OCI-LY7 (cell line): ENCODE measurements at regions of chr12 and their contacts with region 1.

Region 1: DNA sequence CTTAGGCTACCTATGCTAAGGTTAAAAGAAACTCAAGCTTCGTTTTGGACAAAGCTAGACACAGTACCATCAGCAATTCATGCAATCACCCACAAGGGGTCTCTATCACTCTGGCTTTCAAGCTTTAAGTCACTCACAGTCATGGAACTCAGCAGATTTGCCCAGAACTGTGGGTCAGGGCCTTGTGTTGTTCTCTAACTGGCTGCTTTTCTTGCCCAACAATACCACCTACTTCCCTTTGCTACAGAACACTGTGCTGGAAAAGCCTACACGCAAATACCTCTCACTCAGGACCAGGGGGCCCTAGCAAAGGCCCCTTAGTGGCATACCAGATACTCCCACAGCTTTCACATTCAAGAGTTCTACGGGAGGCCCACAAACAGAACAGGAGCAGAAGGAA is 9.1 kb downstream of the NEMP1 start:
- DNase-seq: peak; percentile 82
- H3K4me3 ChIP-seq: no peak overlapping the region
- H3K27ac ChIP-seq: peak overlapping the region; percentile 30
- H3K4me1 ChIP-seq: peaks cover 27% of the 10 kb centered on the region
- CTCF ChIP-seq: peak; percentile 94

Region 2: GRCh38 chr12:56709759-56710376 is 359.7 kb before region 1 on chr12:
- CTCF ChIA-PET with region 1: no interaction called
- POLR2A ChIA-PET with region 1: no interaction called
- intact Hi-C with region 1: no loop called
- DNase-seq: no peak
- H3K4me3 ChIP-seq: no peak overlapping the region
- H3K27ac ChIP-seq: no peak overlapping the region
- H3K4me1 ChIP-seq: no peaks in the 10 kb centered on the region
- CTCF ChIP-seq: no peak

Region 3: GRCh38 chr12:57005980-57006808 is 63.3 kb before region 1 on chr12 and contains the start of gene ZBTB39:
- CTCF ChIA-PET with region 1: interaction called, 4 read pairs
- POLR2A ChIA-PET with region 1: interaction called, 3 read pairs
- intact Hi-C with region 1: loop called (anchors 2 kb)
- DNase-seq: peak; percentile 84
- H3K4me3 ChIP-seq: peak within 1 kb of the TSS; percentile 92
- H3K27ac ChIP-seq: peak within 1 kb of the TSS; percentile 44
- H3K4me1 ChIP-seq: peaks cover 15% of the 10 kb centered on the region
- CTCF ChIP-seq: peak; percentile 76
- total RNA-seq, gene ZBTB39: 10.9 TPM in 2 replicates

Region 4: GRCh38 chr12:57088459-57089248 is 19.1 kb after region 1 on chr12 and contains the start of gene NAB2:
- CTCF ChIA-PET with region 1: interaction called, 10 read pairs
- POLR2A ChIA-PET with region 1: interaction called, 7 read pairs
- intact Hi-C with region 1: loop called (anchors 1 kb)
- DNase-seq: peak; percentile 96
- H3K4me3 ChIP-seq: peak within 1 kb of the TSS; percentile 80
- H3K27ac ChIP-seq: peak within 1 kb of the TSS; percentile 88
- H3K4me1 ChIP-seq: peaks cover 42% of the 10 kb centered on the region
- CTCF ChIP-seq: no peak
- total RNA-seq, gene NAB2: 8.5 and 9.6 TPM in 2 replicates

Region 5: GRCh38 chr12:57182921-57183790 is 113.6 kb after region 1 on chr12:
- CTCF ChIA-PET with region 1: no interaction called
- POLR2A ChIA-PET with region 1: no interaction called
- intact Hi-C with region 1: loop called (anchors 5 kb)
- DNase-seq: peak; percentile 80
- H3K4me3 ChIP-seq: no peak overlapping the region
- H3K27ac ChIP-seq: no peak overlapping the region
- H3K4me1 ChIP-seq: peaks cover 3% of the 10 kb centered on the region
- CTCF ChIP-seq: peak; percentile 93